ENCODE measurements at regions of chr1 and their contacts with region 1.

Region 1: DNA sequence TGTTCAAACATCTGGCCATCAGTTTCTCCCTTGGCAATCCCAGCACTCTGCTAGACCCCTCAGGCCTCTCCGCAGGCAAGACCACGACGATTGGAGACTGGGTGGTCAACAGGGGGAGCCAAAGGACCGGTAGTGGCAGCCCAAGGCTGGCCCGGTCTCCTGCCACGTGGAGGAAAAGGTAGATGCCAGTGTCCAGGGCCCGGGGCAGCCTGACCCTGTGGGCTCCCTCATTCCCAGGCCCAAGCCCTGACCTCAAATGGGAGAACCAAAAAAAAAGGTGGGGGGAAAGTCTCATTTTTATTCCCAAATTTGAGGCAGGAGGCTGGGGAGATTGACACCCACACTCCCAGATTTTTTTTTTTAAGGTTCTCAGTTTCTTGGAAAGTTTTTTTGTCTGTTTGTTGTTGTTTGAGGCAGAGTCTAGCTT is 24.8 kb downstream of the S100A6 start:
- DNase-seq: peak; percentile 59
- H3K4me3 ChIP-seq: no peak overlapping the region
- H3K27ac ChIP-seq: peak overlapping the region; percentile 39
- H3K4me1 ChIP-seq: peaks cover 59% of the 10 kb centered on the region
- H3K27me3 ChIP-seq: no peaks in the 10 kb centered on the region
- CTCF ChIP-seq: peak; percentile 88 to 99

Region 2: GRCh38 chr1:153447498-153448170 is 63.4 kb before region 1 on chr1:
- CTCF ChIA-PET with region 1: no interaction called
- dilution Hi-C with region 1: no loop called
- in situ Hi-C with region 1: no loop called
- intact Hi-C with region 1: no loop called
- DNase-seq: peak; percentile 52
- H3K4me3 ChIP-seq: no peak overlapping the region
- H3K27ac ChIP-seq: no peak overlapping the region
- H3K4me1 ChIP-seq: no peaks in the 10 kb centered on the region
- H3K27me3 ChIP-seq: peaks cover 9% of the 10 kb centered on the region
- CTCF ChIP-seq: no peak

Region 3: GRCh38 chr1:153526132-153526543 is 15.1 kb after region 1 on chr1:
- CTCF ChIA-PET with region 1: interaction called, 6 read pairs
- dilution Hi-C with region 1: no loop called
- in situ Hi-C with region 1: no loop called
- intact Hi-C with region 1: loop called (anchors 2 kb)
- DNase-seq: peak; percentile 89
- H3K4me3 ChIP-seq: no peak overlapping the region
- H3K27ac ChIP-seq: peak overlapping the region; percentile 91
- H3K4me1 ChIP-seq: peaks cover 36% of the 10 kb centered on the region
- H3K27me3 ChIP-seq: no peaks in the 10 kb centered on the region
- CTCF ChIP-seq: no peak

Region 4: GRCh38 chr1:153545067-153546055 is 34.4 kb after region 1 on chr1 and contains the start of gene S100A4:
- CTCF ChIA-PET with region 1: no interaction called
- dilution Hi-C with region 1: no loop called
- in situ Hi-C with region 1: no loop called
- intact Hi-C with region 1: loop called (anchors 2 kb)
- DNase-seq: peak; percentile 92
- H3K4me3 ChIP-seq: no peak within 1 kb of the TSS
- H3K27ac ChIP-seq: peak within 1 kb of the TSS; percentile 53
- H3K4me1 ChIP-seq: peaks cover 70% of the 10 kb centered on the region
- H3K27me3 ChIP-seq: no peaks in the 10 kb centered on the region
- CTCF ChIP-seq: no peak
- total RNA-seq, gene S100A4: 4.3 to 9.9 TPM

Region 5: GRCh38 chr1:153670859-153671627 is 160.0 kb after region 1 on chr1 and contains the start of gene ILF2:
- CTCF ChIA-PET with region 1: no interaction called
- dilution Hi-C with region 1: no loop called
- in situ Hi-C with region 1: no loop called
- intact Hi-C with region 1: loop called (anchors 2 kb)
- DNase-seq: peak; percentile 99
- H3K4me3 ChIP-seq: peak within 1 kb of the TSS; percentile 66 to 96 (median 82)
- H3K27ac ChIP-seq: peak within 1 kb of the TSS; percentile 81
- H3K4me1 ChIP-seq: peaks cover 15% of the 10 kb centered on the region
- H3K27me3 ChIP-seq: no peaks in the 10 kb centered on the region
- CTCF ChIP-seq: peak in 1 of 2 donors; percentile 35
- total RNA-seq, gene ILF2: 151 to 158 TPM

Region 6: DNA sequence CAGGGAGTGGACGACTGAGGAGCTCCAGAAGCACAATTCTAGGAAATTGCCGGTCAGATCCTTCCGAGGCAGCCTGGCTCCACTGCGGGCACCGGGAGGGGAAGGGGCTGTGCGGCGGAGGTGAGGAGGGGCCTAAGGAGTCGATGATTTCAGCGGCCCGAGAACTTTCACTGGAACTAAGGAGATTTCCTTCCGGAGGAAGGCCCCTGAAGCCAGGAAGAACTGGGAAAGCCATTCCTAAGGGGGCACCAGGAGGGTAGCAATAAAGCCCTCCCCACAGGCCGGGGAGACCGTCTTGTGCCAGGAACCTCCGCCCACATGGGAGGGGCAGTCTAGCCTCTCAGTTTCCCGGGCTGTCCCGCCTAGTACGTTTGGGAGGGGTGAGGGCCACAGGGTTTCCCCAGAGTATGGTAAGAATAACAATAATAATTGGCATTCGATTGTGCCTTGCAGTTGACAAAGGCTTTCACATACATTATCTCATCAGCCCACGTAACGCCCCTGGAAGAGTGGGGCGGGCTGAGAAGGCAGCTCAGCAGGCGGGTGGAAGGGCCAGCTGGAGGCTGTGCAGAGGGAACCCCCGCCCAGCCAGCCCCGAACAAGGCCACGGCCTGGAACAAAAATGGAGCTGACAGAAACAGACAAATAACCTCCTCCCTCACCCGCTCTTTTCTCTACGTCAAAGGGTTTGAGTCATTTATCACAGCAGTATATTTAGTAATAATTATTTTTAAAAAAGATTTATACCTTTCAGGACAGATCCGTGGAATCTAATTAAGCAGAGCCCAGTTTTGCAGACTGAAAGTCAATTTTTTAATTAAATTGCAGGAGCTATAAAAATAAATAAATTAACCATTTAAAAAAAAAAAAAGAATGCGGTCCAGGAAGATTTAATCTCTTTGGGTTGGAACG is 187.3 kb after region 1 on chr1:
- CTCF ChIA-PET with region 1: no interaction called
- dilution Hi-C with region 1: no loop called
- in situ Hi-C with region 1: no loop called
- intact Hi-C with region 1: no loop called
- DNase-seq: no peak
- H3K4me3 ChIP-seq: no peak overlapping the region
- H3K27ac ChIP-seq: no peak overlapping the region
- H3K4me1 ChIP-seq: peaks cover 7% of the 10 kb centered on the region
- H3K27me3 ChIP-seq: no peaks in the 10 kb centered on the region
- CTCF ChIP-seq: no peak

Measured in mammary epithelial cell (primary cell).